ENCODE measurements at regions of chr16 and their contacts with region 1.

Region 1: GRCh38 chr16:85898521-85899442 is at the start of gene IRF8:
- DNase-seq: peak; percentile 92
- H3K4me3 ChIP-seq: peak within 1 kb of the TSS; percentile 96
- H3K27ac ChIP-seq: peak within 1 kb of the TSS; percentile 99
- H3K4me1 ChIP-seq: peaks cover 51% of the 10 kb centered on the region
- CTCF ChIP-seq: no peak
- total RNA-seq, gene IRF8: 181 and 188 TPM in 2 replicates

Region 2: GRCh38 chr16:85688586-85689284 is 210.0 kb before region 1 on chr16 and contains the start of gene GINS2:
- CTCF ChIA-PET with region 1: no interaction called
- POLR2A ChIA-PET with region 1: no interaction called
- intact Hi-C with region 1: loop called (anchors 5 kb)
- DNase-seq: peak; percentile 97
- H3K4me3 ChIP-seq: peak within 1 kb of the TSS; percentile 87
- H3K27ac ChIP-seq: peak within 1 kb of the TSS; percentile 90
- H3K4me1 ChIP-seq: peaks cover 50% of the 10 kb centered on the region
- CTCF ChIP-seq: no peak
- total RNA-seq, gene GINS2: 74.3 and 80.9 TPM in 2 replicates

Region 3: DNA sequence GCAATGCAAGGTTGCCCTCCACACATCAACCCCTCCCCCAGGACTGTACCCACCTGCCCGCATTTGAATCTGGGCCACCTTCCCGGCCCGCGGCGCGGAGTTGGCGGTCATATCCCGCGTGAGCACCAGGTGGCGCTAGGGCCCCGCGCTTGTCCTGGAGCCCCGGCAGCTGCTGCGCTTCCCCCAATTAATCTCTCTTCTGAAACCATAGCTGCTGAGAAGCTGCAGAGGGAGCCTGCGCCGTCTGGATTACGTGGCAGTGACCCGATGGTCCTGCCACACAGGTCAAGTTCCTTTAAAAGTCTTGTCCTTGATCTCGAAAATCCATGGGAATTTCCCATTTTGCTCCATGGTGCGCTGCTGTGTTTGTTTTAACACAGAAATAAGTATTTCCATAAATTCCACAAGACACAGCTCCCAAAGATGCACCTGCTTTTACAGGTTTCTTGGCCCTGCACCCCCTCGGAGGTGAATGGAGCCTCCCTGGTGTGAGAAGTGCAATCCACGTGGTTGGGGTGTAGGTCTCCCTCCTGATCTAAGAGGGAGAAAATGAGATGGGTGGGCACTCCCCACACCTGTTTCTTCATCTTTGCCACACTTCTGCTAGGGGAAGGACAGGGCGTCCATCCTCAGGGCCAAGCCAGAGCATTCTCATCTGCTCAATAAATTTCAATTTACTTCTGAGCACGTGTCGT is 77.2 kb before region 1 on chr16:
- CTCF ChIA-PET with region 1: interaction called, 9 read pairs
- POLR2A ChIA-PET with region 1: interaction called, 3 read pairs
- intact Hi-C with region 1: loop called (anchors 1 kb)
- DNase-seq: peak; percentile 90
- H3K4me3 ChIP-seq: no peak overlapping the region
- H3K27ac ChIP-seq: no peak overlapping the region
- H3K4me1 ChIP-seq: peaks cover 12% of the 10 kb centered on the region
- CTCF ChIP-seq: peak; percentile 99

Region 4: GRCh38 chr16:85975451-85975981 is 76.7 kb after region 1 on chr16:
- CTCF ChIA-PET with region 1: no interaction called
- POLR2A ChIA-PET with region 1: no interaction called
- intact Hi-C with region 1: no loop called
- DNase-seq: no peak
- H3K4me3 ChIP-seq: no peak overlapping the region
- H3K27ac ChIP-seq: no peak overlapping the region
- H3K4me1 ChIP-seq: no peaks in the 10 kb centered on the region
- CTCF ChIP-seq: no peak

Region 5: GRCh38 chr16:86016201-86016871 is 117.6 kb after region 1 on chr16:
- CTCF ChIA-PET with region 1: no interaction called
- POLR2A ChIA-PET with region 1: no interaction called
- intact Hi-C with region 1: loop called (anchors 10 kb)
- DNase-seq: peak; percentile 75
- H3K4me3 ChIP-seq: no peak overlapping the region
- H3K27ac ChIP-seq: no peak overlapping the region
- H3K4me1 ChIP-seq: peaks cover 4% of the 10 kb centered on the region
- CTCF ChIP-seq: peak; percentile 94